ENCODE measurements at regions of chr17 and their contacts with region 1.

Region 1: GRCh38 chr17:78736526-78737079 is 45.5 kb downstream of the CYTH1 start:
- DNase-seq: peak in 9 of 10 donors; percentile 54 to 83 (median 67)
- ATAC-seq: peak; percentile 72 to 88
- H3K4me3 Mint-ChIP-seq: peak overlapping the region; percentile 87 to 97 (median 93)
- H3K27ac Mint-ChIP-seq: peak overlapping the region; percentile 86 to 96 (median 94)
- H3K4me1 Mint-ChIP-seq: peaks cover 59 to 91% (median 90%) of the 10 kb centered on the region in 4 donors
- H3K27me3 Mint-ChIP-seq: no peaks in the 10 kb centered on the region

Region 2: DNA sequence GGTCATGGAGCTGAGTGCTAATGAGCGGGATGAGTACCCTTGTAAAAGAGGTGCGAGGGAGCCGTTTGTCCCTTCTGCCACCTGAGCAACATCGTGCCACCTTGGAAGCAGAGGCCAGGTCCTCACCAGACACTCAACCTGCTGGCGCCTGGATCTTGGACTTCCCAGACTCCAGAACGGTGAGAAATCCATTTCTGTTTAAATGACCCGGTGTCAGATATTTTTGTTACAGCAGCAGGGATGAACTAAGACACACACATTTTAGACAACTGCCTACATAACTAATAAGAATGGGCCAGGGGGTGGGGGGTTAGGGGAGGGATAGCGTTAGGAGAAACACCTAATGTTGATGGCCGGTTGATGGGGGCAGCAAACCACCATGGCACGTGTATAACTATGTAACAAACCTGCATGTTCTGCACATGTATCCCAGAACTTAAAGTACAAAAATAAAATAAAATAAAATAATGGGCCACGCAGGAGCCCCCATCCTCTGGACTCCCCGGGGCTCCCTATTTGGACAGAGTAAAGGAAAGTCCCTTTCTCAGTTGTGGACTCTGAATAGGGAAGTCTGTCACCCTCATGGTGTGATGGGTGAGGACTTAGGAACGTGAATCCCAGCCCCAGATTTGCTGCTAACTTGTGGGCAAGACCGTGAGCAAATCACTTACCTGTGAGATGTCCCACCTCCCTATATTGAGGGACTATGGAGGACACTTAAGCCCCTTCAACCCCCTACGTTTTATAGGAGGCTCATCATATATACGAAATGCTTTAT is 98.8 kb before region 1 on chr17:
- POLR2A ChIA-PET with region 1: no interaction called
- DNase-seq: no peak
- ATAC-seq: no peak
- H3K4me3 Mint-ChIP-seq: no peak overlapping the region
- H3K27ac Mint-ChIP-seq: no peak overlapping the region
- H3K4me1 Mint-ChIP-seq: peaks cover 0 to 6% (median 4%) of the 10 kb centered on the region in 4 donors
- H3K27me3 Mint-ChIP-seq: no peaks in the 10 kb centered on the region

Region 3: GRCh38 chr17:78716814-78717393 is 19.7 kb before region 1 on chr17:
- POLR2A ChIA-PET with region 1: interaction called, 24 read pairs
- DNase-seq: peak in 2 of 10 donors; percentile 34 to 35
- ATAC-seq: peak; percentile 54 to 60
- H3K4me3 Mint-ChIP-seq: peak overlapping the region; percentile 58 to 84 (median 76)
- H3K27ac Mint-ChIP-seq: peak overlapping the region; percentile 60 to 95 (median 84)
- H3K4me1 Mint-ChIP-seq: peaks cover 56 to 95% (median 90%) of the 10 kb centered on the region in 4 donors
- H3K27me3 Mint-ChIP-seq: no peaks in the 10 kb centered on the region

Region 4: DNA sequence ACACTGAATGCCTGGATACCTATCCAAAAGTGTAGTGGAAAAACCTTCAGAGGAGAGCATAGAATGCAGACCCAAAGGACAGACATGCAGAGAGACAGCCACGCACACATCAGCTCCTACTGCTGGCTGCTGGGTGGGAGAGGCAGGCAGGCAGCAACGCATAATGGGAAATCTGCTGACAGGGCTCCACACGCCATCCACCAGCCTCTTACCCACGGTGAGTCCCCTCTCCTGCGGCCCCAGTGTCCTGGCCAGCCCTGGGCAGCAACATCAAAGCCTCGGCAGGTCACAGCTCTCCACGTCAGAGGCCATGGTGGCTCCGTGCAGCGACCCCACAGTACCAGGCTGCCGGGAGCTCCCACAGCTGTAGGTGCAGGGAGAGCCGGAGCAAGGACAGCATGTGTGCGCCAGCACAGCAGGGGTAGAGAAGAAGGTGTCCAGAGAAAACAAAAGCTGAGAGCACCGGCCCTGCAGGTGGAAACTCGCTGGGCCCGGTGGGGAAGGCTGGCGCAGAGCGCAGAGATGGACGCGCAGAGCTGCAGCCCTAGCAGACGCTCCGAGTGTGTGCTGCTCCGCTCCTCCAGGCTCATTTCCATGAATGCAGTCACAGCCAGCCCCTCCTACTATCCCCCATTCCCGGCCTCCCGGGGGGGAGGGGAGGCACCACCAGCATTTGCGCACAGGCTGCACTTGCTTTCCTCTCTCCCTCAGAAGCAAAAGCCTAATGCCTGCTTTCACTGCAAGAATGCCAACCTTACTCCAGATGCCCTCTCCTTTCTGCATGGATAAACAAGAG is 13.4 kb before region 1 on chr17:
- POLR2A ChIA-PET with region 1: interaction called, 28 read pairs
- DNase-seq: no peak
- ATAC-seq: no peak
- H3K4me3 Mint-ChIP-seq: peak overlapping the region; percentile 45 to 83 (median 76)
- H3K27ac Mint-ChIP-seq: peak overlapping the region; percentile 67 to 96 (median 90)
- H3K4me1 Mint-ChIP-seq: peaks cover 69 to 98% (median 95%) of the 10 kb centered on the region in 4 donors
- H3K27me3 Mint-ChIP-seq: no peaks in the 10 kb centered on the region

Region 5: DNA sequence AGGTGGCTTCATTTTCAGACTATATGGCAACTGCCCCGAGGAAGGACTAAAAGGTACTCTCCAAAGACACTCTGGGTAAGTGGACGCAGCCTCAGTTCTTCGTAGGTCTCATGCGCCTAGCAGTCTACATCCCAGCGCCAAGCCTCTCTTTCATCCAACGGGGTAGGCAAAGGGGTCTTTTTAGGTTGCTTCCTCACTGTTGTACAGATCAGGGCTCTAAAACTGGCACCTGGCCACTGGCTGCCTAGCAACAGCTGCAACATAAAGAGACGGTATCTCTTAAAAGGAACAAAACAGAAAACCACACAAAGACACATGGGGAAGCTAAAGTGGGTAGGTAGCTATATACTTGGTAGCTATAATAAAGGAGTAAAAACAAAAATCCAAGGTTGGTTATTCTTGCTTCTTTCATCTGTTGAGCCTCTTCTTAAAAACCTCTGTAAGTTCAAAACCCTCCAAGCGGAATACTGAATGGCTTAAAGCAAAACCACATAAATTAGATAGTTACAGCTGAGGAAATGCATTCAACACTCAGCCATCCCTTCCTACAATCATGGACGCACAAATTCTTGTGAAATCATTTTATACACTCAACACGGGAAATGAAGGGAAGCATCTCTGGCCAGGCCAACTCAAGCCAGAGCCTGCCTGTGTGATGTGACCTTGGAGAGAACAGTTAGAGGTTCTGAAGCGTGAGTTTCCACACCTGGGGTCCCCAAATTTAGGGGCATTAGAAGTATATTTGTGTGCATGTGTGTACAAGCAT is 22.8 kb after region 1 on chr17:
- POLR2A ChIA-PET with region 1: interaction called, 12 read pairs
- DNase-seq: peak; percentile 68 to 97 (median 90)
- ATAC-seq: peak; percentile 75 to 87
- H3K4me3 Mint-ChIP-seq: peak overlapping the region; percentile 61 to 88 (median 79)
- H3K27ac Mint-ChIP-seq: peak overlapping the region; percentile 90 to 99 (median 98)
- H3K4me1 Mint-ChIP-seq: peaks cover 26 to 90% (median 76%) of the 10 kb centered on the region in 4 donors
- H3K27me3 Mint-ChIP-seq: no peaks in the 10 kb centered on the region